ENCODE measurements at regions of chr1 and their contacts with region 1.

Region 1: DNA sequence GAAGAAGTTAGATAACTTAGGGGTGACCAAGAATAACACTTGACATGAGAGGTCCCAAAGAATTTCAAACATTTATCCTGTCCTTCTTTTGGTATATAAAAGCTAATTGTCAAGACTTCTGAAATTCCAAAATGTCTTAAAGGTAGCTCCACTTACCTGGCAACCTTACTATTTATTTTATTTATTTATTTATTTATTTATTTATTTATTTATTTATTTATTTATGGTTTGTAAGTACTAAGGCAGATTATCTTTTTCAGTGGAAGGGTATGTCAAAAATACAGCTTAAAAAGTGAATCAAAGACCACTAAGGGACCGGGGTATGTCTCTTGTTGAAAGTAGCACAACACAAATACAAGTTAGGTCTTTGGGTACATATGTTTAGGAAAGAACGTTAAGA is 620.8 kb upstream of the B3GALT2 start:
- DNase-seq: no peak
- ATAC-seq: no peak
- H3K4me3 ChIP-seq: no peak overlapping the region
- H3K27ac ChIP-seq: no peak overlapping the region
- H3K4me1 ChIP-seq: no peaks in the 10 kb centered on the region
- H3K27me3 ChIP-seq: no peaks in the 10 kb centered on the region
- CTCF ChIP-seq: no peak

Region 2: GRCh38 chr1:193747579-193747978 is 59.6 kb before region 1 on chr1:
- intact Hi-C with region 1: no loop called
- DNase-seq: no peak
- ATAC-seq: no peak
- H3K4me3 ChIP-seq: no peak overlapping the region
- H3K27ac ChIP-seq: no peak overlapping the region
- H3K4me1 ChIP-seq: no peaks in the 10 kb centered on the region
- H3K27me3 ChIP-seq: no peaks in the 10 kb centered on the region
- CTCF ChIP-seq: no peak

Region 3: DNA sequence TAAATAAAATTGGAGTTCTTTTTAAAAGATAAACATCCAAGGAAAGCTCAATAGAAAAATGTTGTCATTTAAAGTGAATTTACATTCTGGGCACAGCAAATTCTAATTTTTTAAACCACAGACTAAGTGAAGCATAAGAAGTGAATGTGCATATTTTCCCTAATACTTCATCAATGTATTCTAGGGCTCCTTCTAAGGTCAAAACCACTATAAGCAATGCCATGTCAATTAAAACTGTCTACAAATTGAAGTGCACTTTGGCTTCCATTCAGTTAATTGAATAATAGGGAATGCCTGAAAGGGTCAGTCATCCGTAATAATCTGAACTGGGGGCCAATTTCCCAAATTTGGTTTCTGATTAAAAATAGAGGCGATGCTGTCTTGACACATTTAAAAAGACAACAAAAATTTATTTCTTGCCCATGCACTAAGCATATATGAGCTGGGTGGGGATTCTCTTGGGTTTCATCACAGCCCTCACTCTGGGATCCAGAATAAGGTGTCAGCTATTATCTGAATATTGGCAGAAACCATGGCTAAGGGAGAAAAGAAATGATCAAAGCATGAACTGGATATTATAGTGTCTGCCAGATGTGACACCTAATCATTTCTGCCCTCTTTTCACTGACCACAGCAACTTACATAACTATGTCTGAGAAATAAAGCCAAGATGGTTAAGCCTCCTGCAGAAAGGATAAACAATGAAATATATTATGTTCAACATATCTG is 39.8 kb after region 1 on chr1:
- intact Hi-C with region 1: loop called in 1 of 10 experiments (anchors 1 kb)
- DNase-seq: no peak
- ATAC-seq: no peak
- H3K4me3 ChIP-seq: no peak overlapping the region
- H3K27ac ChIP-seq: no peak overlapping the region
- H3K4me1 ChIP-seq: no peaks in the 10 kb centered on the region
- H3K27me3 ChIP-seq: no peaks in the 10 kb centered on the region
- CTCF ChIP-seq: no peak

Region 4: GRCh38 chr1:193905288-193906072 is 98.3 kb after region 1 on chr1:
- intact Hi-C with region 1: no loop called
- DNase-seq: no peak
- ATAC-seq: no peak
- H3K4me3 ChIP-seq: no peak overlapping the region
- H3K27ac ChIP-seq: no peak overlapping the region
- H3K4me1 ChIP-seq: peaks cover 0 to 13% (median 0%) of the 10 kb centered on the region in 9 donors
- H3K27me3 ChIP-seq: no peaks in the 10 kb centered on the region
- CTCF ChIP-seq: no peak